Sigmoid colon (tissue), 7 donors: ENCODE measurements at regions of chr9 and their contacts with region 1.

Region 1: DNA sequence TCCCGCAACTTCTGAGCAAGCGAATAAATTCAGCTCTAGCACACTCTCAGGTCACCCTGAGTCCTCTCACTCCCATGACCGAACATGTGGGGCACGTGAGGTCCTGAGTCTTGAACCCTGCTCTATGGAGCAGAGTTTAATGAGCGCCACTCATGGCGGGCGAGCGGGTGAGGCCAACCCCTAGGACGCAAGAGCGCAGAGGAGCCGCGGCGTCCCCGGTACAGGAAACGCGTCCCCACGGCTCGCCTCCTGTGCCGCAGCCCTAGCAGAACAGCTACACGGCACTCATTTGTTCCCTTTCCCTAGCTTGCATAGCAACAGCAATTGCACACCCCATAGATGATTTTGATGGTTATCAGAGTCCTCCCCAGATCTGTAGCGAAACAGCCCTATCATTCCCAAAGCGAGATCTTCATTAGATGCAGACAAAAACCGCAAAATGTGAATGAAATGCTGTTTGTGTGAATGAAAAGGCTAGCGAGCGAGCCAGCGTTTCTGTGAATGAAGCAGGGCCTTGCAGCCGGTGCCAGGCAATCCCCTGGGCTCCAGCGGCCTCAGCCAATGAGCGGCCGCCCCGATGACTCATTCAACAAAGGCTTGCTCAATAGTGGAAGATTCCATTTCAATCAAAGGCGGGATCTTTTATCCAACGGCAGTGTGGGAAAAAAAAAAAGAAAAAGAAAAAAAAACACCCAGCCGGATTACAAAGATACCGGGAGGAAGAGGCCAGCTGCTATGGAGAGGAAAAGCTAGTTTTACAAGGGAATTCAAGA is 1.5 kb upstream of the SHC3 start:
- DNase-seq: peak; percentile 95
- H3K4me3 ChIP-seq: peak overlapping the region in 3 of 4 donors; percentile 25 to 43 (median 39)
- H3K27ac ChIP-seq: peak overlapping the region; percentile 59 to 77 (median 66)
- H3K4me1 ChIP-seq: peaks cover 0 to 41% (median 36%) of the 10 kb centered on the region in 4 donors
- H3K27me3 ChIP-seq: peaks cover 28 to 49% (median 30%) of the 10 kb centered on the region in 3 donors
- CTCF ChIP-seq: no peak
- EP300 ChIP-seq: no peak
- POLR2A ChIP-seq: no peak

Region 2: GRCh38 chr9:89137542-89138462 is 42.3 kb before region 1 on chr9:
- intact Hi-C with region 1: loop called (anchors 5 kb)
- DNase-seq: peak; percentile 92
- H3K4me3 ChIP-seq: no peak overlapping the region
- H3K27ac ChIP-seq: peak overlapping the region; percentile 48 to 79 (median 70)
- H3K4me1 ChIP-seq: peaks cover 0 to 31% (median 23%) of the 10 kb centered on the region in 4 donors
- H3K27me3 ChIP-seq: no peaks in the 10 kb centered on the region
- CTCF ChIP-seq: no peak
- EP300 ChIP-seq: no peak
- POLR2A ChIP-seq: no peak

Region 3: GRCh38 chr9:89309608-89310474 is 129.8 kb after region 1 on chr9:
- intact Hi-C with region 1: loop called (anchors 5 kb)
- DNase-seq: no peak
- H3K4me3 ChIP-seq: peak overlapping the region; percentile 66 to 97 (median 80)
- H3K27ac ChIP-seq: peak overlapping the region; percentile 99 to 100 (median 100)
- H3K4me1 ChIP-seq: peaks cover 0 to 33% (median 23%) of the 10 kb centered on the region in 4 donors
- H3K27me3 ChIP-seq: no peaks in the 10 kb centered on the region
- CTCF ChIP-seq: no peak
- EP300 ChIP-seq: no peak
- POLR2A ChIP-seq: no peak